CD4-positive, alpha-beta memory T cell (primary cell): ENCODE measurements at regions of chr7 and their contacts with region 1.

Region 1: GRCh38 chr7:157432957-157433576 is 96.3 kb downstream of the DNAJB6 start:
- DNase-seq: peak in 4 of 5 donors; percentile 55 to 61 (median 58)
- H3K4me3 ChIP-seq: peak overlapping the region in 1 of 2 donors; percentile 16
- H3K4me3 Mint-ChIP-seq: peak overlapping the region in 5 of 8 donors; percentile 53 to 80 (median 65)
- H3K27ac ChIP-seq: no peak overlapping the region
- H3K27ac Mint-ChIP-seq: peak overlapping the region in 5 of 7 donors; percentile 13 to 90 (median 66)
- H3K4me1 ChIP-seq: peaks cover 15% of the 10 kb centered on the region
- H3K4me1 Mint-ChIP-seq: peaks cover 12 to 20% (median 13%) of the 10 kb centered on the region in 4 donors
- H3K27me3 ChIP-seq: no peaks in the 10 kb centered on the region
- H3K27me3 Mint-ChIP-seq: peaks cover 0 to 3% of the 10 kb centered on the region in 2 donors

Region 2: DNA sequence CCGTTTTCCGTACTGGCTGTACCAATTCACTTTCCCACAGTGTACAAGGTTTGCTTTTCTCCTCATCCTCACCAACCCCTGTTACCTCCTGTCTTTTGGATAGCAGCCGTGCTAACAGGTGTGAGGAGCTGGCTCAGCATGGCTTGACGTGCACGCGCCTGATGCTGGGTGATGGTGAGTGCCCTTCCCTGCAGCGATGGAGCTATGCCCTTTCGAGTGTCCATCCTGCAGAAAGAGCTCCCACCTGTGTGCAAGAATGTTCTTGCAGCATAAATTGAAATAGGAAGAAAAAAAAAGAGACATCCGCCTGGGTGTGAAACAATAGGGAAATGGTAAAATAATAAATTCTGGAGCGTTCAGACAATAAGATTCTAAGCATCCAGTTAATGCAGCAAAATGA is 303.9 kb before region 1 on chr7:
- CTCF ChIA-PET with region 1: no interaction called
- POLR2A ChIA-PET with region 1: no interaction called
- intact Hi-C with region 1: no loop called
- DNase-seq: no peak
- H3K4me3 ChIP-seq: no peak overlapping the region
- H3K4me3 Mint-ChIP-seq: no peak overlapping the region
- H3K27ac ChIP-seq: no peak overlapping the region
- H3K27ac Mint-ChIP-seq: peak overlapping the region in 1 of 7 donors; percentile 57
- H3K4me1 ChIP-seq: no peaks in the 10 kb centered on the region
- H3K4me1 Mint-ChIP-seq: no peaks in the 10 kb centered on the region
- H3K27me3 ChIP-seq: no peaks in the 10 kb centered on the region
- H3K27me3 Mint-ChIP-seq: peaks cover 10 to 16% of the 10 kb centered on the region in 2 donors

Region 3: DNA sequence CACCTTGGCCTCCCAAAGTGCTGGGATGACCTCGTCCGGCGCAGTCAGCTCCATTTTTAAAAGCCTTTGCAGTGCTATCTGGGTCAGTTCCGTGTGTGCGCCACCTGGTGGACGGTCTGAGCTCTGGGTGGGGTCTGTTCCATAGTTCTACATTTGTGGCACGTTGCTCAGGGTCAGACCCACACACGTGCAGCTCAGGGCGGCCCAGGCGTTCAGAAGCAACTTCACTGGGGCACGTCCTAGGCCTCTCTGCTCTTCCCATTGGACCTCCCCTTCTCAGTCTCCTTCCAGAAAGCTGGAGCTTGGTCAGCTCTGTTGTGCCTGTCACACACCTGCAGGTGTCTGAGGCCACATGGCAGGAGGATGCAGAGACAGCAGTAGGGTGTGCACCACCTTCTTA is 41.6 kb after region 1 on chr7:
- CTCF ChIA-PET with region 1: interaction called, 21 read pairs
- POLR2A ChIA-PET with region 1: interaction called, 8 read pairs
- intact Hi-C with region 1: loop called (anchors 2 kb)
- DNase-seq: no peak
- H3K4me3 ChIP-seq: no peak overlapping the region
- H3K4me3 Mint-ChIP-seq: peak overlapping the region in 2 of 8 donors; percentile 13 to 34
- H3K27ac ChIP-seq: no peak overlapping the region
- H3K27ac Mint-ChIP-seq: peak overlapping the region in 5 of 7 donors; percentile 19 to 80 (median 43)
- H3K4me1 ChIP-seq: peaks cover 55% of the 10 kb centered on the region
- H3K4me1 Mint-ChIP-seq: peaks cover 33 to 82% (median 52%) of the 10 kb centered on the region in 4 donors
- H3K27me3 ChIP-seq: no peaks in the 10 kb centered on the region
- H3K27me3 Mint-ChIP-seq: no peaks in the 10 kb centered on the region

Region 4: GRCh38 chr7:157490457-157490912 is 57.4 kb after region 1 on chr7:
- CTCF ChIA-PET with region 1: interaction called, 18 read pairs
- POLR2A ChIA-PET with region 1: no interaction called
- intact Hi-C with region 1: loop called (anchors 2 kb)
- DNase-seq: peak; percentile 79 to 86 (median 81)
- H3K4me3 ChIP-seq: no peak overlapping the region
- H3K4me3 Mint-ChIP-seq: peak overlapping the region in 7 of 8 donors; percentile 4 to 73 (median 66)
- H3K27ac ChIP-seq: peak overlapping the region; percentile 6
- H3K27ac Mint-ChIP-seq: peak overlapping the region; percentile 55 to 93 (median 87)
- H3K4me1 ChIP-seq: peaks cover 37% of the 10 kb centered on the region
- H3K4me1 Mint-ChIP-seq: peaks cover 26 to 50% (median 37%) of the 10 kb centered on the region in 4 donors
- H3K27me3 ChIP-seq: no peaks in the 10 kb centered on the region
- H3K27me3 Mint-ChIP-seq: peaks cover 0 to 2% of the 10 kb centered on the region in 2 donors

Region 5: GRCh38 chr7:157612664-157613561 is 179.8 kb after region 1 on chr7:
- CTCF ChIA-PET with region 1: interaction called, 5 read pairs
- POLR2A ChIA-PET with region 1: no interaction called
- intact Hi-C with region 1: loop called (anchors 1 kb)
- DNase-seq: peak; percentile 75 to 82 (median 78)
- H3K4me3 ChIP-seq: peak overlapping the region; percentile 6 to 74
- H3K4me3 Mint-ChIP-seq: peak overlapping the region; percentile 85 to 92 (median 90)
- H3K27ac ChIP-seq: peak overlapping the region; percentile 43
- H3K27ac Mint-ChIP-seq: peak overlapping the region; percentile 76 to 95 (median 91)
- H3K4me1 ChIP-seq: peaks cover 8% of the 10 kb centered on the region
- H3K4me1 Mint-ChIP-seq: peaks cover 5 to 18% (median 13%) of the 10 kb centered on the region in 4 donors
- H3K27me3 ChIP-seq: no peaks in the 10 kb centered on the region
- H3K27me3 Mint-ChIP-seq: no peaks in the 10 kb centered on the region

Region 6: DNA sequence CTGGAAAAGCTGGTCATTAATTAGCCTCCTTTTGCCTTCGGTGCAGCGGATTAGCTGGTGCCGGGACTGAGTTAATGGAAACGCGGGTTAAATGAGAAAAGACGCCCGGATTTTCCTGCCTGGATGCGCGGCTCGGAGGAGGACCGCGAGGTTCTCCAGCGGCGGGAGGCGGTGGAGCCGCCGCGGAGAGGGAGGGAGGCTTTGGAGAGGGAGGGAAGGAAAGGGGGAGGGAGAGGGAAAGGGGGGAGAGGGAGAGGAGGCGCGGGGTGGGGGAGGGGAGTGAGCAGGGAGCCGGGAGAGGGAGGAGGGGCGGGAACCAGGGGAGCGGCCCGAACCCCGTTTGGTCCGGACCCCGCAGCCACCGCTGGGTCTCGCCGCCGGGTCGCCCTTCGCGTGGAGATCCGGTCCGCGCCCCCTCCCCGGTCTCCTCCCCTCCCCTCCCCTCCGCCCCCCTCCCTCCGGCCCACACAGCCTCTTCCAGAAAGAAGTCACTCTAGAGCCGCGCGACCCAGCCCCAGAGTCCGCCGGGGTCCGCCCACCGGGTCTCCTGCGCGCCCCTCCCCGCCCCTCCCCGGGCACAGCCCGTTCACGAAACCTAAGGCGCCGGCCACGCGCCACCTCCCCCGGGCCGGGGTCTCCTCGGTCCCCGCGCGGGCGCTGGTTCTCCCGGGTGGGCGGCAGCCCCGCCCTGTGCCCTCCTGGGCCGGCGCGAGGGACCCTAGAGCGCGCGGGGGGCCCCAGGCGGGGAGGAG is 251.3 kb after region 1 on chr7:
- CTCF ChIA-PET with region 1: no interaction called
- POLR2A ChIA-PET with region 1: no interaction called
- intact Hi-C with region 1: loop called (anchors 10 kb)
- DNase-seq: no peak
- H3K4me3 ChIP-seq: no peak overlapping the region
- H3K4me3 Mint-ChIP-seq: peak overlapping the region in 6 of 8 donors; percentile 21 to 69 (median 64)
- H3K27ac ChIP-seq: no peak overlapping the region
- H3K27ac Mint-ChIP-seq: no peak overlapping the region
- H3K4me1 ChIP-seq: peaks cover 10% of the 10 kb centered on the region
- H3K4me1 Mint-ChIP-seq: peaks cover 14 to 43% (median 22%) of the 10 kb centered on the region in 4 donors
- H3K27me3 ChIP-seq: peaks cover 67% of the 10 kb centered on the region
- H3K27me3 Mint-ChIP-seq: peaks cover 56 to 60% of the 10 kb centered on the region in 2 donors

Region 7: DNA sequence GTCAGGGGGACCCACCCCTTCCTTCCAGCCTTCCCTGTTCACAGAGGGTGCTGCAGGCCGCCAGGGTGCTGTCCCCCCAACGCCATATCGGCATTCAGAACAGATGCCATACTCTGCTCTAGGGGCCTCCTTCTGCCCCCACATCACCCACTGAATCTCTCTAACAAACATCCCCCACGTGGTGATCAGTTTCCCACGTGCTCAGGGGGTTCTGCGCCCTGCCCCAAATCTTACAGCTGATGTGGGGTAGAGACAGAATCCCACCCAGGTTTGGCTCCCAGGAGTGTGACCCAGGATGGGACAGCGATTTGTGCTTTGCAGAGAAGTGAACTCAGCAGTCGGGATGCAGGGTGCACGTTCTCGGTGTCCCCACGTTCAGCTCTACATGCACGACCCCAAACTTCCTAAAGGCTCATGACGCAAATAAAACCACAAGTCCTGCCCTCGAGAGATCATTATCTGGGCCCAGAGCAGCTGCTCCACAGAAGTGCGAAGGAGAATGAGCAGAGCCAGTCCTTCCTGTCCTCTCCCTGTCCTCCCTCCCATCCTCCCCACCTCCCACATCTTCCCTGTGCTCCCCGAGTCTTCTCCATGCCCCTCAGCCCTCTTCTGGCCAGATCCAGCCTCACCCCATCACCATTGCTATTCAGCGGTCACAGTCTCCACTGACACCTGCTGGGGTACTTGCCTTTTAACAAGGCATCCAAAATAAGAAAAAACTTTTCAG is 327.1 kb after region 1 on chr7:
- CTCF ChIA-PET with region 1: no interaction called
- POLR2A ChIA-PET with region 1: no interaction called
- intact Hi-C with region 1: loop called (anchors 2 kb)
- DNase-seq: no peak
- H3K4me3 ChIP-seq: no peak overlapping the region
- H3K4me3 Mint-ChIP-seq: no peak overlapping the region
- H3K27ac ChIP-seq: no peak overlapping the region
- H3K27ac Mint-ChIP-seq: no peak overlapping the region
- H3K4me1 ChIP-seq: no peaks in the 10 kb centered on the region
- H3K4me1 Mint-ChIP-seq: peaks cover 0 to 5% (median 4%) of the 10 kb centered on the region in 4 donors
- H3K27me3 ChIP-seq: no peaks in the 10 kb centered on the region
- H3K27me3 Mint-ChIP-seq: peaks cover 6 to 7% of the 10 kb centered on the region in 2 donors